Right cardiac atrium (tissue), 5 donors: ENCODE measurements at regions of chr19 and their contacts with region 1.

Region 1: GRCh38 chr19:7799640-7800355 is 30.2 kb upstream of the EVI5L start:
- DNase-seq: peak; percentile 65 to 75 (median 66)
- ATAC-seq: peak; percentile 70 to 82
- H3K4me3 ChIP-seq: no peak overlapping the region
- H3K27ac ChIP-seq: no peak overlapping the region
- H3K4me1 ChIP-seq: no peaks in the 10 kb centered on the region
- H3K27me3 ChIP-seq: no peaks in the 10 kb centered on the region

Region 2: DNA sequence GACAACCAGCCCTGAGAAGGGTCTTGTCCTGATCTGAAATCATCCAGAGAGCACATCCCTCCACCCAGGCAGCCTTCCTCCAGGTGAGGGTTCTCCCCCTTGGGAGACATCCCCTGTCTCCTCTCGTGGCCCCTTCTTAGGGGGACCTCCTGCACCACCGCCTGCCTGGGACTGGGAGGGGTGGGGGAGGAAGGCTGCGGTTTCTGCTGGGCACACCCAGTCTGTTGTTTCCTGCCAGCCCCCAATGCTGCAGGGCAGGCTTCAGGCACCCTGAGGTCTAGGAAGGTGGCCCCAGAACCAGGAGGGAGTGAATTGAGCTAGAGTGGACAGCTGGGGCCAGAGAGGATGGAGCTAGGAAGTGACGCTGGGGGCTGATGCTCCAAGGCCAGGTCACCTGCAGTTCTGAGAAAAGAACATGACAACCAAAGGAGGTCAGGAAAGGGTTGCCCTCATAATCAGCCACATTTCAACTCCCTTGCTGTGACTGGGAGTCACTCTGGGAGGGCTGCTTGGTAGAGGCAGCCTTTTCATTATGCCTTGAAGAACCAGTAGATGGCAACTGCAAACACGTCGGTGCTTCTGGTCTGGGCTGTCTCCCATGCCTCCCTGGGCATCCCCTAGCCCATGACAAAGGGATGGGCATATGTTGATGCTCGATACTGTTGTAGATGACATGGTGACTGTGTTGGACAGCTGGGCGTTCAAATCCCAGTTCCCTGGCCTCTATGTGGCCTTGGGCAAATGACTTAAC is 449.7 kb before region 1 on chr19:
- intact Hi-C with region 1: loop called in 2 of 4 experiments (anchors 5 to 10 kb)
- DNase-seq: no peak
- ATAC-seq: peak in 1 of 2 donors; percentile 32
- H3K4me3 ChIP-seq: no peak overlapping the region
- H3K27ac ChIP-seq: no peak overlapping the region
- H3K4me1 ChIP-seq: no peaks in the 10 kb centered on the region
- H3K27me3 ChIP-seq: no peaks in the 10 kb centered on the region

Region 3: DNA sequence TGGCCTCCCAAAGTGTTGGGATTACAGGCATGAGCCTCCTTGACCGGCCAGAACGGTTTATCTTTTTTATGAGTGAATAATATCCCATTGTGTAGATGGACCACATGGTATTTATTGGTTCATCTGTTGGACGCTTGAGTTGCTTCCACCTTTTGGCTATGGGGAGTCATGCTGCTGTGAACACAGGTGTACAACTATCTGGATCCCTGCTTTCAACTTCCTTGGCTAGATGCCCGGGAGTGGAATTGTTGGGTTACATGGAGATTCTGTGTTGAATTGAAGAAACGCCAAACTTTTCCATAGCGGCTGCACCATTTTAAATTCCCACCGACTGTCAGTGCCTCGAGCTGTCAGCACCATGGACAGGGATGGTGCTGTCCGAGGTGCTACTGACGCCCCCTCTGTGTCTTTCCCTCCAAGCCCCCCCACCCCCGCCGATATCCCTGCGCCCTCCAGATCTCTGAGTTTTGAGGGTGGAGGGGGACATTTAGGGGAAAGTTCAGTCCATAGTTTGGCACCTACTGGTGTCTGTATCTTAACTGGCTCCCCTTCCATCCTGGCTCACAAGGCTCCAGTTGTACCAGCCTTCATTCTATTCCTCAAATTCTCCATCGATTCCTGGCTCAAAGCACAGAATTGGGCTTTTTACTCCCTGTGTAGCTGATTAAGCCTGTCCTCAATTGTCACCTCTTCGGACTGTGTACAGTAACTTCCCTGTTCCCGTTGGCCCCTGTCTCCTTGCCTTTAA is 237.0 kb before region 1 on chr19:
- intact Hi-C with region 1: loop called in 2 of 4 experiments (anchors 5 kb)
- DNase-seq: no peak
- ATAC-seq: no peak
- H3K4me3 ChIP-seq: no peak overlapping the region
- H3K27ac ChIP-seq: no peak overlapping the region
- H3K4me1 ChIP-seq: no peaks in the 10 kb centered on the region
- H3K27me3 ChIP-seq: no peaks in the 10 kb centered on the region

Region 4: GRCh38 chr19:7652061-7652641 is 147.6 kb before region 1 on chr19:
- intact Hi-C with region 1: loop called in 1 of 4 experiments (anchors 10 kb)
- DNase-seq: peak; percentile 68 to 92 (median 88)
- ATAC-seq: peak; percentile 65 to 80
- H3K4me3 ChIP-seq: peak overlapping the region; percentile 9
- H3K27ac ChIP-seq: no peak overlapping the region
- H3K4me1 ChIP-seq: no peaks in the 10 kb centered on the region
- H3K27me3 ChIP-seq: no peaks in the 10 kb centered on the region

Region 5: DNA sequence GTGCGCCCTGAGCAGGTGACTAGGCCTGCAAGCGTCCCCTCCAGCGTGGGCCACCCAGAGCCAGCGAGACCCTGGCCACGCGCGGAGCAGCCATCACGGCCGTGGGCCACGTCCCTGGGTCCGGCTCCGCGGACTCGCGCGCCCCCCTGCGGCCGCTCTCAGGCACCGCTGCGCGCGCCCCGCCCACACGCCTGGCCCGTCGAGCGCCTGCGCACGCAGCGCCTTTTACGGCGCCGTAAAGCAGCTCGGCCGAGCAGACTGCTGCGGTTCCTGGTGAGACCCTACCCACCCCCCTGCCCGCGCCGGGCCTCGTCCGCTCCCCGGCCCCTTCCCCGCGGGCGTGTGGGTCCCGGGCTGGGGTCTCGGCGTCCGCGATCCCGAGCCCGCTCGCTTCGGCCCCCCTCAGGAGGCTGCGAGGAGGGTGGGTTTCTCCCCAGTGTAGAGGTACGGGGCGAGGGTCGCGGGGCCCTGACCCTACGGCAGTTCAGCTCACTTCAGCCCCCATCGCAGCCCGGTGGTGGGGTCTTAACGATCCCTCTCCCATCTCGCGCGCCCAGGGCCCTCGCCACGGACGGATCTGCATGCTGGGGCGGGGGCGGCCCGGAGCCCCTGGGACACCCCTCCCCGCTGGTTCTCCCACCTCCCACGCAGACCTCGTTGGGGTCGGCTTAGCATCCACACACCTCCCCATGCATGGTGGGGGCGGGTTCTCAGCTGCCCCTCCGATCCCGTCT is 119.0 kb before region 1 on chr19 and contains the start of gene TRAPPC5:
- intact Hi-C with region 1: loop called in 2 of 4 experiments (anchors 5 to 10 kb)
- DNase-seq: peak; percentile 88 to 97 (median 96)
- ATAC-seq: peak; percentile 90
- H3K4me3 ChIP-seq: peak within 1 kb of the TSS; percentile 92
- H3K27ac ChIP-seq: peak within 1 kb of the TSS; percentile 13
- H3K4me1 ChIP-seq: no peaks in the 10 kb centered on the region
- H3K27me3 ChIP-seq: no peaks in the 10 kb centered on the region
- total RNA-seq, gene TRAPPC5: 94.8 to 121 (median 97.1) TPM

Region 6: DNA sequence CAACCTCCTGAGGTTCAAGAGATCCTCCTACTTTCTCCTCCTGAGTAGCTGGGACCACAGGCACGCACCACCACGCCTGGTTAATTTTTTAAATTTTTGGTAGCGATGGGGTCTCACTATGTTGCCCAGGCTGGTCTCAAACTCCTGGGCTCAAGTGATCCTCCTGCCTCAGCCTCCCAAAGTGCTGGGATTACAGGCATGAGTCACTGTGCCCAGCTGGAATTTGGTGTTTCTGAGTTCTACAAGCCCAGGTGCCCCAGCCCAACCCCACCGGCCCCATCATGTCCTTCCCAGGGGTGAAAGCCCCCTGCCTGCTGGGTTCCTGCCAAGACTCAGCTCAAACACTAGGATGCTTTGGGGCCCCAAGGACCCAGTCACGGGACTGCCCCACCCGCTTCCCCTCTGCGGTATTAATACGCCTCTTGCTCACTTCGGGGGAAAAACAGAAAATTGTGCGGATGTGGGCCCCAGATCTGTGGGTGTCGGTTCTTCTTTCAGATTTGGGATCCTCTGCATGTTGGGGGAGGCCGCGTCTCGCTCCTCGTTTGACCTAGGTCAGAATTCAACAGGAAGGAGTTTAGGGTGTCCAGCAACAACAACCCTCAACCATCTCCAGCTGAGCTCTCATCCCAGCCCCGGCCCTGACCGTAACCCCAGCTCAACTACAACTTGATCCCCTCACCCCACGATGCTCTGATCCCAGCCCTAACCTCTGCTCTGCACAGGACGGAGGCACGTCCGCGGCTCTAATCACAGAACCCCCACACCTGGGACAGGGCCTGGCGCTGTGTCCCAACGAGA is 94.2 kb before region 1 on chr19:
- intact Hi-C with region 1: no loop called
- DNase-seq: peak; percentile 46 to 73 (median 66)
- ATAC-seq: peak; percentile 15 to 47
- H3K4me3 ChIP-seq: no peak overlapping the region
- H3K27ac ChIP-seq: no peak overlapping the region
- H3K4me1 ChIP-seq: no peaks in the 10 kb centered on the region
- H3K27me3 ChIP-seq: no peaks in the 10 kb centered on the region

Region 7: GRCh38 chr19:8224394-8225145 is 424.8 kb after region 1 on chr19:
- intact Hi-C with region 1: no loop called
- DNase-seq: peak; percentile 60 to 74 (median 67)
- ATAC-seq: peak; percentile 49 to 61
- H3K4me3 ChIP-seq: no peak overlapping the region
- H3K27ac ChIP-seq: no peak overlapping the region
- H3K4me1 ChIP-seq: peaks cover 4% of the 10 kb centered on the region
- H3K27me3 ChIP-seq: no peaks in the 10 kb centered on the region